ENCODE measurements at regions of chr16 and their contacts with region 1.

Region 1: GRCh38 chr16:15829460-15829859 is 27.4 kb downstream of the MYH11 start:
- DNase-seq: no peak
- H3K4me3 ChIP-seq: no peak overlapping the region
- H3K27ac ChIP-seq: no peak overlapping the region
- H3K4me1 ChIP-seq: no peaks in the 10 kb centered on the region
- H3K27me3 ChIP-seq: no peaks in the 10 kb centered on the region
- CTCF ChIP-seq: no peak

Region 2: DNA sequence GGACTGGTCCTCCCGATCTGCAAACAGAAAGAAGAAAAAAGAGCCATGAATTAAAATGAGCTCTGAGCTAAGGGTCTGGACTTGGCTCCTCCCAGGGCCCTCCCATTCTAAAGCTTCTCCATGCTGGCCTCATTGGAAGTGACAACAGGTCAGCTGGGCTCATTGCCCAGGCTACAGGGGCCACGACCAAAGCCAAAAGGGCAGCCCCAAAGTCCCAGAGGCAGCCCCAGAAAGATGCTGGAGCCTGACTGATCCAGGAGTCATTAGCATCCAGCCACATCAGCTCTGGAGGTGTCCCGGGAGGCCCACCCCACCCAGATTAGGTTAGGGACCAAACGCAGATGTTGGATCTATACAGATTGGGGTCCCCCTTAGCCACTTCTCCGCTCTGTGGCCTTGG is 30.8 kb before region 1 on chr16:
- CTCF ChIA-PET with region 1: interaction called, 10 read pairs
- POLR2A ChIA-PET with region 1: no interaction called
- intact Hi-C with region 1: no loop called
- DNase-seq: no peak
- H3K4me3 ChIP-seq: no peak overlapping the region
- H3K27ac ChIP-seq: no peak overlapping the region
- H3K4me1 ChIP-seq: no peaks in the 10 kb centered on the region; the same call in 1 of the 2 replicates
- H3K27me3 ChIP-seq: peaks cover 9% of the 10 kb centered on the region
- CTCF ChIP-seq: no peak

Region 3: DNA sequence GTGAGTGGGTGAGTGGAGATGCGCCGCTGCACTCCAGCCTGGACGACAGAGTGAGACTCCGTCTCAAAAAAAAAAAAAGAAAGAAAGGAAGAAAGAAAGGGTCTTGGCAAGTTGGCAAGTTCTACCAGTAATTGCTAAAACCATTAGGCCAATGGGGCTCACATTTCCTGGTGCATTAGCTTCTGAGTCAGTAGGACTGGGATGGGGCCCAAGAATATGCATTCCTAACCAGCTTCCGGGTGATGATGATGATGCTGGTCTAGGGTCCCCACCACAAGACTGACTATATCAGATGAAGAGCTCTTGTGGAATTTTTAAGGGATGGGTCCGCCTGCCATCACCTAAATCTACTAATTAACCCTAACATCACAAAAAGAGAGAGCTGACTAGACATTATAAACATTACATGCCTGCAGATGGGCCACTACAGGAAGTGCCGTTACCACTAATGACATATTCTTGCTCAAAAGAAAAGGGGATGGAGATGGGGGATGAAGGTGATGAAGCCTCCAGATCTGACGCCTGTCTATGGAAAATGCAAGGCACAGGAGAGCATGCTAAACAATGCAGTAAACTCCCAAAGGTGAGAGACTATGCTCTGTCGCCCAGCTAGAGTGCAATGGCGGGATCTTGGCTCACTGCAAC is 14.3 kb after region 1 on chr16:
- CTCF ChIA-PET with region 1: no interaction called
- POLR2A ChIA-PET with region 1: no interaction called
- intact Hi-C with region 1: no loop called
- DNase-seq: no peak
- H3K4me3 ChIP-seq: no peak overlapping the region
- H3K27ac ChIP-seq: no peak overlapping the region
- H3K4me1 ChIP-seq: no peaks in the 10 kb centered on the region
- H3K27me3 ChIP-seq: no peaks in the 10 kb centered on the region
- CTCF ChIP-seq: no peak